CD4-positive, alpha-beta memory T cell (primary cell): ENCODE measurements at regions of chr19 and their contacts with region 1.

Region 1: DNA sequence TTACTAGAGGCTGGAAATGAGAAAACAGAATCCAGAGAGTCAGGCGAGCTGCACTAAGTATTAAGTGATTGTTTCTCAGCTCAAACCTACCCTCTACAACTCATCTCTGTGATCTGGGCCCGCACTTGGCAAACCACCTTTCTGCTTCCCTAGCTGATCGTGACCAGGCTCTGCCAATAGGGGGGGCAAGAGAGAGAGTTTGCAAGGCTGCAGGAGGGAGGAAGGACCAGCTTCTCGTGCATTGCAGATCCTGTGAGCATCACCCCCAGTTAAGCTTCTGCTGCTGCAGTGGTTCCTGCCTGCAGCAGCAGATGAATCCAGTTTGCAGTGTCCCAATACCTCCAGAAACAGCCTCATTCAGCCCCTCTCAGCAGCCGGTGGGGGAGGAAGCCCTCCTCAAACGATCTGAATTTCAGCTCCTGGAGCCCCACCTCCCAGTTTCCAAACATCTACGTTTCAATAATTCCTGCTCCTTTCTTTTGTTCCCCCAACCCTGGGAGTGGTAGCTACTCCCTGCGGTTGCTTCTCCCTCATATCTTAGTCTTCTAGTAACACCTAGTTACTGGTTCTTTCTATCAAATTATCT is 20.0 kb downstream of the XRCC1 start:
- DNase-seq: peak; percentile 81 to 85 (median 82)
- H3K4me3 ChIP-seq: no peak overlapping the region
- H3K4me3 Mint-ChIP-seq: peak overlapping the region in 2 of 8 donors; percentile 31 to 52
- H3K27ac ChIP-seq: no peak overlapping the region
- H3K27ac Mint-ChIP-seq: peak overlapping the region; percentile 6 to 85 (median 77)
- H3K4me1 ChIP-seq: peaks cover 7% of the 10 kb centered on the region
- H3K4me1 Mint-ChIP-seq: peaks cover 10 to 19% (median 12%) of the 10 kb centered on the region in 4 donors
- H3K27me3 ChIP-seq: no peaks in the 10 kb centered on the region
- H3K27me3 Mint-ChIP-seq: no peaks in the 10 kb centered on the region

Region 2: GRCh38 chr19:43496960-43497359 is 58.3 kb before region 1 on chr19:
- CTCF ChIA-PET with region 1: no interaction called
- POLR2A ChIA-PET with region 1: no interaction called
- intact Hi-C with region 1: no loop called
- DNase-seq: no peak
- H3K4me3 ChIP-seq: no peak overlapping the region
- H3K4me3 Mint-ChIP-seq: peak overlapping the region in 1 of 8 donors; percentile 16
- H3K27ac ChIP-seq: no peak overlapping the region
- H3K27ac Mint-ChIP-seq: peak overlapping the region in 1 of 7 donors; percentile 38
- H3K4me1 ChIP-seq: no peaks in the 10 kb centered on the region
- H3K4me1 Mint-ChIP-seq: peaks cover 3 to 9% (median 7%) of the 10 kb centered on the region in 4 donors
- H3K27me3 ChIP-seq: no peaks in the 10 kb centered on the region
- H3K27me3 Mint-ChIP-seq: no peaks in the 10 kb centered on the region

Region 3: GRCh38 chr19:43511324-43511723 is 44.0 kb before region 1 on chr19:
- CTCF ChIA-PET with region 1: no interaction called
- POLR2A ChIA-PET with region 1: no interaction called
- intact Hi-C with region 1: no loop called
- DNase-seq: no peak
- H3K4me3 ChIP-seq: no peak overlapping the region
- H3K4me3 Mint-ChIP-seq: no peak overlapping the region
- H3K27ac ChIP-seq: no peak overlapping the region
- H3K27ac Mint-ChIP-seq: peak overlapping the region in 2 of 7 donors; percentile 14 to 68
- H3K4me1 ChIP-seq: no peaks in the 10 kb centered on the region
- H3K4me1 Mint-ChIP-seq: peaks cover under 1 to 4% (median 2%) of the 10 kb centered on the region in 4 donors
- H3K27me3 ChIP-seq: no peaks in the 10 kb centered on the region
- H3K27me3 Mint-ChIP-seq: no peaks in the 10 kb centered on the region

Region 4: GRCh38 chr19:43526884-43527859 is 28.1 kb before region 1 on chr19 and contains the start of gene ETHE1:
- CTCF ChIA-PET with region 1: interaction called, 64 read pairs
- POLR2A ChIA-PET with region 1: interaction called, 4 read pairs
- intact Hi-C with region 1: no loop called
- DNase-seq: peak; percentile 52 to 68 (median 57)
- H3K4me3 ChIP-seq: peak within 1 kb of the TSS; percentile 60 to 90
- H3K4me3 Mint-ChIP-seq: peak within 1 kb of the TSS; percentile 75 to 94 (median 80)
- H3K27ac ChIP-seq: peak within 1 kb of the TSS; percentile 67
- H3K27ac Mint-ChIP-seq: peak within 1 kb of the TSS; percentile 37 to 94 (median 88)
- H3K4me1 ChIP-seq: peaks cover 27% of the 10 kb centered on the region
- H3K4me1 Mint-ChIP-seq: peaks cover 17 to 36% (median 22%) of the 10 kb centered on the region in 4 donors
- H3K27me3 ChIP-seq: no peaks in the 10 kb centered on the region
- H3K27me3 Mint-ChIP-seq: no peaks in the 10 kb centered on the region
- total RNA-seq, gene ETHE1: 23.9 to 29.1 TPM

Region 5: DNA sequence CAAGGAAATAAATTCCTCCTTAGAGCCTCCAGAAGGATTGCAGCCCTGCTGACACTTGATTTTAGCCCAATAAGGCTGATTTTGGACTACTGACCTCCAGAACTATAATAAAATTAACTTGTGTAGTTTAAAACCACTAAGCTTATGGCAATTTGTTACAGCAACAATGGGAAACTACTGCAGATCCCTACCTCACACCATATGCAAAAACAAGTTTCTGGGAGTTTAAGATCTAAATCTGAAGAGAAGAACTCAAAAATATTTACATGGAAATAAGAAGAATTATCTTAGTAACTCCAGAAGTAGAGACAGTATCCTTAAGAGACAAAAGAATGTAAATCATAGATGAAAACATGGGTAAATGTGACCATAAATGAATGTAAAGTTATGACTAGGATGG is 16.4 kb before region 1 on chr19:
- CTCF ChIA-PET with region 1: interaction called, 64 read pairs
- POLR2A ChIA-PET with region 1: interaction called, 16 read pairs
- intact Hi-C with region 1: loop called (anchors 2 kb)
- DNase-seq: no peak
- H3K4me3 ChIP-seq: no peak overlapping the region
- H3K4me3 Mint-ChIP-seq: no peak overlapping the region
- H3K27ac ChIP-seq: no peak overlapping the region
- H3K27ac Mint-ChIP-seq: no peak overlapping the region
- H3K4me1 ChIP-seq: peaks cover 1% of the 10 kb centered on the region
- H3K4me1 Mint-ChIP-seq: peaks cover 0 to 8% (median 3%) of the 10 kb centered on the region in 4 donors
- H3K27me3 ChIP-seq: no peaks in the 10 kb centered on the region
- H3K27me3 Mint-ChIP-seq: no peaks in the 10 kb centered on the region

Region 6: DNA sequence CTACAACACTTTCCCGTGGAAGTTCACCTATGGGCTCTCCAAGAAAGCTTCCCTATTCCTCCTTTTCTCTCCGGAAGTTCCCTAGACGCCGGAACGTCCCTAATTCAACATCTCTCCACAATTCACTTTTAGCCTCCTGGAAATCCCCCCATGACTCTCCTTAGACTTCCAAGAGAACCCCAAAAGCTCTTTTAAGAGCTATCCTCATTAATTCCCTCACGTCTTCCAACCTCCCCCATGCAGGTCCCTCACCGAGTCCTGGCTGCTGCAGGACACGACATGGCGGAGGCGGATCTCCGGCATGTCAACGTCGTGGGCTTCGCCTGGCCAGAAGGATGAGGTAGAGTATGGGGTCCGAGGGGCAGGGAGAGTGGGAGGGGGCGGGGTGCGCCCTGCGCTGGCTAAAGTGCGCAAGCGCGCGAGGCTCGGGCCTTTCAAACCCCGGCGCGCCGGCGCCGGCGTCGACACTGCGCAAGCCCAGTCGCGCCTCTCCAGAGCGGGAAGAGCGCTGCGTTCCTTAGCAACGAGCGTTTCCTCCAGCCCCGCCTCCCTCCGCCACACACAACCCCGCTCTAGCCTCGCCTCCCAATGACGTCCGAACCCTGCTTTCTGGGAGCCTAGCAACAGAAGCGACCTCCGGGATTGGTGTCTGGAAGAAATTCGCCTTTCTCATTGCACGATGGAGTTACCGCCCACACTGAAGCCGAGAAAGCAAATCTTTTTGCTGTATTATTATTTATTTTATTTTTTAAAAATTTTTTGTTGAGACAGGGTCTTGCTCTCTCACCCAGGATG is 20.1 kb after region 1 on chr19 and contains the starts of genes PINLYP and XRCC1:
- CTCF ChIA-PET with region 1: interaction called, 31 read pairs
- POLR2A ChIA-PET with region 1: interaction called, 29 read pairs
- intact Hi-C with region 1: no loop called
- DNase-seq: peak; percentile 95 to 99 (median 98)
- H3K4me3 ChIP-seq: peak within 1 kb of the TSS; percentile 79 to 100
- H3K4me3 Mint-ChIP-seq: peak within 1 kb of the TSS; percentile 93 to 99 (median 96)
- H3K27ac ChIP-seq: peak within 1 kb of the TSS; percentile 99
- H3K27ac Mint-ChIP-seq: peak within 1 kb of the TSS; percentile 98 to 99 (median 99)
- H3K4me1 ChIP-seq: peaks cover 23% of the 10 kb centered on the region
- H3K4me1 Mint-ChIP-seq: peaks cover 15 to 74% (median 38%) of the 10 kb centered on the region in 4 donors
- H3K27me3 ChIP-seq: no peaks in the 10 kb centered on the region
- H3K27me3 Mint-ChIP-seq: peaks cover 0 to 2% of the 10 kb centered on the region in 2 donors
- total RNA-seq, gene PINLYP: 0.33 to 0.84 TPM
- total RNA-seq, gene XRCC1: 33.4 to 41.0 TPM

Region 7: GRCh38 chr19:43624933-43625332 is 69.7 kb after region 1 on chr19:
- CTCF ChIA-PET with region 1: interaction called, 20 read pairs
- POLR2A ChIA-PET with region 1: interaction called, 4 read pairs
- intact Hi-C with region 1: no loop called
- DNase-seq: peak; percentile 78 to 89 (median 83)
- H3K4me3 ChIP-seq: no peak overlapping the region
- H3K4me3 Mint-ChIP-seq: peak overlapping the region in 3 of 8 donors; percentile 4 to 49 (median 11)
- H3K27ac ChIP-seq: no peak overlapping the region
- H3K27ac Mint-ChIP-seq: peak overlapping the region in 6 of 7 donors; percentile 18 to 88 (median 34)
- H3K4me1 ChIP-seq: peaks cover 19% of the 10 kb centered on the region
- H3K4me1 Mint-ChIP-seq: peaks cover 11 to 35% (median 20%) of the 10 kb centered on the region in 4 donors
- H3K27me3 ChIP-seq: no peaks in the 10 kb centered on the region
- H3K27me3 Mint-ChIP-seq: peaks cover 2 to 9% of the 10 kb centered on the region in 2 donors

Region 8: GRCh38 chr19:43826787-43827754 is 271.8 kb after region 1 on chr19 and contains the start of gene ZNF283:
- CTCF ChIA-PET with region 1: no interaction called
- POLR2A ChIA-PET with region 1: no interaction called
- intact Hi-C with region 1: no loop called
- DNase-seq: peak; percentile 73 to 80 (median 76)
- H3K4me3 ChIP-seq: peak within 1 kb of the TSS; percentile 70 to 73
- H3K4me3 Mint-ChIP-seq: peak within 1 kb of the TSS; percentile 73 to 94 (median 91)
- H3K27ac ChIP-seq: peak within 1 kb of the TSS; percentile 33
- H3K27ac Mint-ChIP-seq: peak within 1 kb of the TSS; percentile 41 to 89 (median 83)
- H3K4me1 ChIP-seq: peaks cover 13% of the 10 kb centered on the region
- H3K4me1 Mint-ChIP-seq: peaks cover 9 to 20% (median 16%) of the 10 kb centered on the region in 4 donors
- H3K27me3 ChIP-seq: no peaks in the 10 kb centered on the region
- H3K27me3 Mint-ChIP-seq: peaks cover 0 to 1% of the 10 kb centered on the region in 2 donors
- total RNA-seq, gene ZNF283: 18.1 to 20.7 TPM